A549 (cell line): ENCODE measurements at regions of chr12 and their contacts with region 1.

Region 1: GRCh38 chr12:53391729-53392128 is 11.8 kb downstream of the SP1 start:
- DNase-seq: no peak
- ATAC-seq: no peak
- H3K4me3 ChIP-seq: no peak overlapping the region
- H3K27ac ChIP-seq: no peak overlapping the region
- H3K4me1 ChIP-seq: peaks cover 32% of the 10 kb centered on the region; the same call in 2 of the 3 replicates
- CTCF ChIP-seq: no peak
- EP300 ChIP-seq: no peak
- POLR2A ChIP-seq: no peak
- RAD21 ChIP-seq: no peak

Region 2: DNA sequence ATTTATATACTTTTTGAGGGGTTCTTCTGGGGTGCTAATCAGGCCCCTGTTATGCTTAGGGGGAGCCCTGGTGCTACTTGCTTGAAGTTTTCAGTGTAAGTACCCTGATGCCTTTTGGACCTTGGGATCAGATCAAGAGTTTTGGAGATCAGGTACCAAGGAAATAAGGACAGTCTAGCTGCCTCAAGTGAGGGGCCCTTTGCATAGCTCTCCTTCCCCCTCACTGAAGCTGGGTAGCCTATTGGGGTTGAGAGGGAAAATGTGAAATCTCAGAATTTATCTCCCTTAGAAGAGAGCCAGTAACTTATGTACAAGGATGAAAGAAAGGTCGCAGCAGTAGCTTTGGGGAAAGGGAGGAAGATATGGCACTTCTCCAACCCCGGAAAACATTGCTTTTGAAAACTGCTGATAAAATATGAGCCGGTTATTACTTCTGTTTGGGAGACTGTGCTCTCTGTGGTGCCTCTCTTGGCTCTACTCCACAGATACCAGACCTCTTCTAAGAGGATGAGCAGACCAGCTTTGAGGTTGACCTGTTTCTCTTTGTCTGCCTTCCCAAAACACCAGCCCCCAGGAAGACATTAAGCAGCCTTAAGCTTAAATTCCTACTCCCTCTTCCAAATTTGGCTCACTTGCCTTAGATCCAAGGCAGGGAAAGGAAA is 23.2 kb after region 1 on chr12:
- CTCF ChIA-PET with region 1: interaction called, 15 read pairs
- POLR2A ChIA-PET with region 1: no interaction called
- DNase-seq: no peak
- ATAC-seq: no peak; a peak in 1 of 6 replicates
- H3K4me3 ChIP-seq: no peak overlapping the region
- H3K27ac ChIP-seq: no peak overlapping the region
- H3K4me1 ChIP-seq: peaks cover 45% of the 10 kb centered on the region
- CTCF ChIP-seq: no peak
- EP300 ChIP-seq: no peak
- POLR2A ChIP-seq: no peak
- RAD21 ChIP-seq: no peak